Prostate gland (tissue), 2 donors: ENCODE measurements at regions of chr22 and their contacts with region 1.

Region 1: GRCh38 chr22:49930739-49931412 is 12.4 kb downstream of the CRELD2 start:
- DNase-seq: peak; percentile 93
- H3K4me3 ChIP-seq: no peak overlapping the region
- H3K27ac ChIP-seq: peak overlapping the region; percentile 77 to 94
- H3K4me1 ChIP-seq: peaks cover 13% of the 10 kb centered on the region
- H3K27me3 ChIP-seq: no peaks in the 10 kb centered on the region
- CTCF ChIP-seq: peak; percentile 47 to 91 (median 80)
- POLR2A ChIP-seq: peak; percentile 63

Region 2: DNA sequence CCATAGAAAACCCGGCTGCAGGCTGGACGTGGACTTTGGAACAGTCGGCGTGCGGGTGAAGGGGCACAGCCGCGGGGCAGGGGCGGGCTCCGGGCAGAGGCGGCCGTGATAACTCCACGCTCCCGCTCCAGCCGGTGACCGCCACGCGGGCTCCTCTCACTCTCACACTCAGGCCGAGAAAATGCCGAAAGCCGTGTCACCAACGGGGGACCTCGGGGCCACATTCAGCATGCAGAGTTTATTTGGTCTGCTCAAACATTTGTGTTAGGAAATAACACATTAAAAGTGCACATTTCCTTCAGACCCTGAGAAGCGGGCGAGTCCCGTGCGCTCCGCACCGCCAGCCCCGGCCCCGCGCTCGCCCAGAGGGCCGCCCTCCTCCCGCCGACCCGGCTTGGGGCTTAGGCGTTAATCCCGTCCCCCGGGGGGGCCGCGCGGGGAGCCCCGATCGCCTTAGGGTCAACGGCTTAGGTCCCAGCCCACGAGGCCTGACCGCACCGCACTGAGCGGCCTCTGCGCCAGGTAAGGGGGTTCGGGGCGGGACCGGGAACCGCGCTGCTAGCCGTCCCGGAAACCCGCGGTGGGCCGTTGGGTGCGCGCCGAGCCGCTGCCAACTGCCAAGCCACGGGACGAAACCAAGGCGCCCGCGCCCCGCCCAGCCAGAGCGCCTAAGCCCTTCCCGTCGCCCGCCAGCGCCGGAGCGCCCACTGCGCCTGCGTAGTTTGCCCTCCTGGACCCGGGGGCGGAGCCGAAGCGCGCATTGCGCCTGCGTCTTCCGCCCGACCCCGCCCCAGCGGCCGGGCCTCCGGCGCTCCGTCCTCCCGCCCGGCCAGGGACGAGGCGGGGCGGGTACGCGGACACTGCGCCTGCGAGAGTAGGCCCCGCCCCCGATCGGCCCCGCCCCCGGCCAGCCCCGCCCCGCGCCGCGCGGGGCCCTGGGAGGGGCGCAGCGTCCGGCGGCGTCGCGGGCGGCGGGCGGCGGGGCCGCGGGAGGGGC is 77.7 kb before region 1 on chr22 and contains the start of gene ZBED4:
- intact Hi-C with region 1: no loop called
- DNase-seq: peak; percentile 96
- H3K4me3 ChIP-seq: peak within 1 kb of the TSS; percentile 65 to 82
- H3K27ac ChIP-seq: peak within 1 kb of the TSS; percentile 89 to 96
- H3K4me1 ChIP-seq: peaks cover 18% of the 10 kb centered on the region
- H3K27me3 ChIP-seq: peaks cover 8% of the 10 kb centered on the region
- CTCF ChIP-seq: peak in 2 of 4 experiments; percentile 17 to 33
- POLR2A ChIP-seq: peak; percentile 91
- total RNA-seq, gene ZBED4: 10.4 to 11.2 TPM

Region 3: GRCh38 chr22:49966774-49967705 is 36.2 kb after region 1 on chr22:
- intact Hi-C with region 1: loop called (anchors 5 kb)
- DNase-seq: no peak
- H3K4me3 ChIP-seq: no peak overlapping the region
- H3K27ac ChIP-seq: peak overlapping the region; percentile 92 to 99
- H3K4me1 ChIP-seq: peaks cover 15% of the 10 kb centered on the region
- H3K27me3 ChIP-seq: no peaks in the 10 kb centered on the region
- CTCF ChIP-seq: no peak
- POLR2A ChIP-seq: no peak

Region 4: DNA sequence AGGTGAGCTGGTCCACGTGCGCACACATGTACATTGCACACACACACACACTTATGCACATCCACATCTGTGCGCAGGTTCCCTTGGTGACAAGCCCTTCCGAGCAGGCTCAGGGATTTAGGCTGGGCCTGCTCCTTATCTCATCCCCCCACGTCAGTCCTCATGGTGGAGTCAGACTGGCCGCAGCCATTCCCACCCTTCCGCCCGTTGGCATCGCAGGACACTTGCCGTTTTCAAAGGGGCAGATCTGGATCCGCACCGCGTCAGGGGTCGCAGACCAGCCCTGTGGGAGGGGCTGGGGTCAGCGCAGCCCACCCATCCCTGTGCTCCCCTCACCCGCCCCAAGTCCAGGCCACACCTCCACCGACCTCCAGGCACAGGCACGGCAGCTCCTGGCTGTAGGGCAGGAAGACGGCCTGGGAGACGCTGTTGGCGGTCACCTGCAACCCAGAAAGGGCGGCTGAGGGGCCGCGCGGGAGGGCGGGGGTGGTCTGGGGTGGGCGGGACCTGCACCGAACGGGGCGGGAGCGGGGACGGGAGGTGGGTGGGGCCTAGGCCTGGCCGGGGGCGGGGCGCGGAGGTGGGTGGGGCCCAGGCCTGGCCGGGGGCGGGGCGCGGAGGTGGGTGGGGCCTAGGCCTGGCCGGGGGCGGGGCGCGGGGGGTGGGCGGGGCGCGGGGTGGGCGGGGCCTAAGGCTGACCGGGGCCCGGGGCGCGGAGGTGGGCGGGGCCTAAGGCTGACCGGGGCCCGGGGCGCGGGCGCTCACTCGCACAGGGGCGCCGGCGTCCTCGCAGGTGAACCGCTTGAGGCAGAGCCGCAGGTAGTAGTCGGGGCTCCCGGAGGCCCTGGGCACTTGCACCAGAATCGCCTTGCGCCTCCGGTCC is 68.4 kb after region 1 on chr22:
- intact Hi-C with region 1: no loop called
- DNase-seq: no peak
- H3K4me3 ChIP-seq: no peak overlapping the region
- H3K27ac ChIP-seq: no peak overlapping the region
- H3K4me1 ChIP-seq: no peaks in the 10 kb centered on the region
- H3K27me3 ChIP-seq: no peaks in the 10 kb centered on the region
- CTCF ChIP-seq: no peak
- POLR2A ChIP-seq: no peak

Region 5: DNA sequence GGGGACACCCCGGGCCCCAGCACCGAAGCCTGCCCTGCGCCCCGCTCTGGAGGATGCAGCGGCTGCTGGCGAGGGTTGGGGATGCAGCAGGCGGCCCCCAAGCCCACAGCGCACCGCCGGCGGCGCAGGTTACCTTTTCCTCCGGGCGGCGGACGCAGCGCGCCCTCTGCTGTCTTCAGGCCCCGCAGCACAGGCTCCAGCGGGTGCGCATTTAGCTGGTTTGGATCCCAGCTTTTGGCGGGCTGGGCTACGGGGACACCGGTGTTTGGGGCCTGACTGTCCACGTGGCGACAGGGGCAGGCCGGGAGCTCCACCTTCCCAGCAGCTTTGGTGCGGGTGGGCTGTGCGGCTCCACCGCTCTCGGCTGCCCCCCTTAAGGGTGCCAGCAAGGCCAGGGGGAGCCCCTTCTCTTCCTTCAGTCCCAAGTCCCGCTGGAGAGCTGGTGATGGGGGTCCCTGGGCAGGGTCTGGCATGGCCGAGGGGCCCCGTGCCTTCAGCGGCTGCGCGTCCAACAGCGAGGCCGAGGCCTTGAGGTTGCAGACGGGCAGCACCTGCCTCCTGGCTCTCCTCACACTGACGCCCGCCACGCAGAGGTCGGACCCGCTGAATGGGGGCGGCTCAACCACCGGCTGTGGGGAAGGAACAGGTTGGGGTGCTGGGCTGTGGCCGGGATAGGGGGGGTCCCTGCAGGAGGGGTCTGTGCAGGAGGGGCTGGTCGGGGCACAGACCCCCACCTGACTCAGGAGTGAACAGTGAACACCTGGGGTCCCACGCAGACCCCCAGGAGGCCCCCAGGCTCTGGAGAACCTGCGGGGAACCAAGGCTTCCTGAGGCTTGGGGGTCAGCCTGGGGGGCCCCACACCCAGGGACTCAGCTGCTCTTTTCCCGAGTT is 99.7 kb after region 1 on chr22:
- intact Hi-C with region 1: loop called (anchors 2 kb)
- DNase-seq: peak; percentile 79
- H3K4me3 ChIP-seq: no peak overlapping the region
- H3K27ac ChIP-seq: no peak overlapping the region
- H3K4me1 ChIP-seq: peaks cover 4% of the 10 kb centered on the region
- H3K27me3 ChIP-seq: no peaks in the 10 kb centered on the region
- CTCF ChIP-seq: peak; percentile 89 to 98 (median 96)
- POLR2A ChIP-seq: no peak